AG04450 (cell line): ENCODE measurements at regions of chr19 and their contacts with region 1.

Region 1: DNA sequence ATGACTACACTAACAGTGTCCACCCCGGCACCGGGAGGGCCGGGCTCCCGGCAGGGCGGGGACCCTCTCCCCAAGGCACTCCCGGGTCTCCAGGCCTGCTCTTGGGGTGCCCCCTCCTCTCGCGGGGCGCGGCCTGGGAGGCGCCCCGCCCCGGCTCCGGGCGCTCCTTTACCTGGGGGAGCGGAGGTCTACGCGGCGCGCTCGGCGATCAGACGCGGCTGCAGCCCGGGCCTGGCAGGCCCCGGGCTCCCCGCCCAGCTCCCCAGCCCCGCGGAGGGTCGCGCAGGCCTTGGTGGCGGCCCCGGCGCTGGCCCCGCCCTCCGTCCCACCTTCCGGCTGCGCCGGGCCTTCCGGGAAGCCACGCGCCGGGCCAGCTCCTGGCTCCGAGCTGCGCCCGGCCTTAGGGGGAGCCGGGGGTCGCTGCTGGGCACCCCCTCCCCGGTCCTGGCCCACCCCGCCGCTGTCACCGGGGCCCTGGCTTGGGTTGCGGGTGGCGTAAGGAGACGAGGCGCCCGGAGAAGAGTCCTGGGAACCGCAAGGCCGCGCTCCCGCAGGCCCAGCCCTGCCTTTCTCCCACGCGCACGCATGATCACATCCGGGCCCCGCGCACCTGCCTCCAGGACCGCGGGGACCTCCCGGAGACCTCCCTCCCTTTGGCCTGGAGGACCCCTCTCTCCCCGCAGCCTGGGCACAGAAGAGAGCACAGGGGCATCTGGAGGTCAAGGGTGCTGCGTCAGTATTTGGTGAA is at the start of gene C19orf12:
- DNase-seq: no peak
- H3K4me3 ChIP-seq: peak within 1 kb of the TSS; percentile 79
- H3K27ac ChIP-seq: peak within 1 kb of the TSS; percentile 52
- H3K27me3 ChIP-seq: no peaks in the 10 kb centered on the region
- CTCF ChIP-seq: no peak
- polyA plus RNA-seq, gene C19orf12: 27.1 and 27.9 TPM in 2 replicates

Region 2: DNA sequence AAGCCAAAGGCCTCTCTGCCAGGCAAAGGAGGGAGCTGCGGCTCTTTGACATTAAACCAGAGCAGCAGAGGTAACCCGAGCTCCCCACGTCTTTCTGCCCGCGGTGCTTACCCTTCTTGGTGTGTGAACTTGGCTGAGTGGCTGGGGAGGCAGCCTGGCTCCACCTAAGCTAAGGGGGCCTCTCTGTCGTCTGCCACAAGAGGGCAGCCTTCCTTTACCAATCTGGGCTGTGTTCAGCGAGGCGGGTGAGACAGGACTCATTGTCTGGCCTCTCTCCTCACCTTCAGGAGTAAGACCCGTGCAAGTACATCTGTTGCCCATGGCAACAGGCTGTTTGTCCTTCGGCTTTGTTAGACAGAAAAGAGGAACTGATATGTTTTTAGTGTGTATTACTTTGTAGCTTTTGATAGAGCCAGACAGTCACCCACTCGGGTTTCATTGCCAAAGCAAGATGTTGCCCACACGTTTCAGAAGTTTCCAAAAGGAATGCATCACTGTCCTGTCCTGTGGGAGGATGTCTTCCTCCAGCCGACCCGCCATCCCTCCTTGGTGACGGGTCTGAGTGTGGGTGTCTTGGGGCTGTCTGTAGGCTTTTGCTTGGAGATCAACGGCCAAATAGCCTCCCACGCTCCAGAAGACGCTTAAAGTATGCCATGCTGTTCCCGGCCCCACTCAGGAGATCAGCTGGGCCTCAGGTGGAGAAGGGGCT is 104.4 kb before region 1 on chr19:
- CTCF ChIA-PET with region 1: interaction called, 550 read pairs
- POLR2A ChIA-PET with region 1: interaction called, 17 read pairs
- DNase-seq: peak; percentile 63
- H3K4me3 ChIP-seq: no peak overlapping the region
- H3K27ac ChIP-seq: no peak overlapping the region
- H3K27me3 ChIP-seq: no peaks in the 10 kb centered on the region
- CTCF ChIP-seq: peak; percentile 91

Region 3: DNA sequence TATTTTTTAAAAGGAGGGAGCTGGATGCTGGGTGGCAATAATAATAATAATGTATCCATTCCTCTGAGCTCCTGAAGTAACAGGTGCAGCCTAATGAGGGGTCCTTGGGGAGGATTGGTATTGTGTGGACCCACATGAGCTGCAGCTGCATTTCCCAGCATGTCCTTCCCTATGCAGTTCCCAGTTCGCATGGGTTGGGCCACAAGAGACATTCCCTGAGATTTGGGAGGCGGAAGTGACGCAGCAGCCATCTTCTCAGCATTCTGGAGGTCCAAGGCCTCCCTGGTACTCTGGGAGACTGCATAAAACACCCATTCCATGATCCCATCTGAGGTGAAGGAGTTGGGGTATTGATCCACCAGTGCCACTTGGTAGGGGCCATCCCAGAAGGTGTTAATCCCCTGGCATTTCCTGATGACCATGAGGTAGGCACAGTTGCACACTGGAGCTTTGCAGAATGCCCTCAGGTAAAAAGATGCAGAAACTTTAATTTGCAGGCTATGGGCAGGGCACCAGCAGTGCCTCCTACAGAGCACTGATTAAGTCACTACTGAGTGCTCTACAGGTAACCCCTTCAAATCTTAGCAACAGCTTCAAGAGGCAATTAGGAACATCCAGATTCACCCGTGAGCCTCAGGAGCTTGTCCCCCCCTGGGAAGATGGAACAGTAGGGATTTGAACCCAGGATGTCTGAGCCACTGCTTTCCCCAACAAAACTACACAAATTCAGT is 83.6 kb before region 1 on chr19:
- CTCF ChIA-PET with region 1: interaction called, 15 read pairs
- POLR2A ChIA-PET with region 1: no interaction called
- DNase-seq: no peak
- H3K4me3 ChIP-seq: no peak overlapping the region
- H3K27ac ChIP-seq: no peak overlapping the region
- H3K27me3 ChIP-seq: peaks cover 4% of the 10 kb centered on the region
- CTCF ChIP-seq: no peak

Region 4: DNA sequence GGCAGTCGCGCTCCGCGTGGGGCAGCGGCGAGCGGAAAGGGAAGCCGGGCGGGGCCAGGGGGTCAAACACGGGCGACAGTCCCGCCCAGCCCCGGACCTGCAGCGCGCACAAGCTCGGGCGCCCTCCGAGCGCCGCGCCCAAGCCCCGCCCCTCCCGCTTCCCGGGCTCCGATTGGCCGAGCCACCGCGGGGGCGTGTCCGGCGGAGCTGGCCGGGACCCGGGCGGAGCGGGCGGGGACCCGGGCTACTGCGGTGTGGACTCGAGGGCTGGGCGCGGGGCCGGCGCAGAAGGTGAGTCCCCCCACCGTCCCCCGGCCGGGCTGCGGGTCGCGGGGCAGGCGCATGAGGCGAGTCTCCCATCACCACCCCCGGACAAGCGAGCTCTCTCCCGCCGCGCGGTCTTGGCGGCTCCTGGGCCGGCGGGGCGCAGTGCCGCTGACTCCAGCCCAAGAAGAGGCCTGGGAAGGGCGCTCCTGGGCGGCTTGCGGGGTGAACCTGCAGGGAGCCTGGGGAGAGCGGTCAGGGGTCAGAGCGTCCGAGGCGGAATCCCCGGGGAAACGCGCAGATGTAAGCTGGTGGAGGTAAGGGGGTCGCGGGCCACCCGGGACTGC is 49.8 kb before region 1 on chr19 and contains the start of gene PLEKHF1:
- CTCF ChIA-PET with region 1: interaction called, 33 read pairs
- POLR2A ChIA-PET with region 1: interaction called, 4 read pairs
- DNase-seq: no peak
- H3K4me3 ChIP-seq: peak within 1 kb of the TSS; percentile 81
- H3K27ac ChIP-seq: peak within 1 kb of the TSS; percentile 81
- H3K27me3 ChIP-seq: no peaks in the 10 kb centered on the region
- CTCF ChIP-seq: no peak
- polyA plus RNA-seq, gene PLEKHF1: 5.4 and 6.4 TPM in 2 replicates

Region 5: DNA sequence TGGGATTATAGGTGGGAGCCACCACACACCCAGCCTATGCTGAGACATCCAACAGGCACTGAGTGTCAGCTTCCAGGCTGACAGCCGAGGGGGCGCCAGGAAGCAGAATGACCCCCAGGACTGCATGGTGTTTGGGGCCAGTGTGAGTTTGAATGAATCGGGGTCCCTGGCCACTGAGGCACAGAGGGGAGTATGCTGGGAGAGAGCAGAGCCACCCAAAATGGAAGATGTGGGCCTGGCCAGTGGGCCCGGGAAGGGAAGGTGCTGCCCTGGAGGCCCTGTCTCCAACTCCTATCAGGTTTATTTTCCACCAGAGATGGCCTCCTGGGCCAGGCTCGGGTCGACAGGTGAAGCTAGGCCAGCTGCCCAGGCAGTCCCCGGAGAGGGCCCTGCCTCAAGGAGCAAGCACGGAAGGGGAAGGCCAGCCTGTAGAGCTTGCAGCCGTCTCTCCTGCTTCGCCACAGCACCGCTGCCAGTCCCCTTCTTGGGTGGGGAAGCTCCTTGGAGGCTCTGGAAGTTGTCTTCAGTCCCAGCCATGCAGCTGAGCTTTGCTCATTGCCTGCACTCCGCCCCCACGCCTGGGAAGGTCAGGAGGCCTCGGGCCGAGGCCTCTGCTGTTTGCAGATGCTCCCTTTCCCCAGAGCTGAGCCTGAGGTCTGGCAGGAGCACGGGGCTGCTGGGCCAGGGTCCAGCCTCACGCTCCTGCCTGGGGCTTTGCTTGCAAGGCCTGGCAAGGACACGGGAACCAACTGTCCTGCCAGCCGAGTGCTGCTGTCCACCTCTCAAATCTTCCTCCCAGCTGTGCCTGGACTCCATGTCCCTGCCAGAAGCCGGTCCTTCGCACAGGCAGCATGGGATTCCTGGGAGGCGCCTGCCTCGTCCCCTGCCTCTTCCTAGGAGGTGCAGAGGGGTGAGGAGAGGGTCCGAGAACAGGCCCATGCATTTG is 36.7 kb before region 1 on chr19:
- CTCF ChIA-PET with region 1: interaction called, 14 read pairs
- POLR2A ChIA-PET with region 1: no interaction called
- DNase-seq: no peak
- H3K4me3 ChIP-seq: no peak overlapping the region
- H3K27ac ChIP-seq: no peak overlapping the region
- H3K27me3 ChIP-seq: no peaks in the 10 kb centered on the region
- CTCF ChIP-seq: no peak

Region 6: DNA sequence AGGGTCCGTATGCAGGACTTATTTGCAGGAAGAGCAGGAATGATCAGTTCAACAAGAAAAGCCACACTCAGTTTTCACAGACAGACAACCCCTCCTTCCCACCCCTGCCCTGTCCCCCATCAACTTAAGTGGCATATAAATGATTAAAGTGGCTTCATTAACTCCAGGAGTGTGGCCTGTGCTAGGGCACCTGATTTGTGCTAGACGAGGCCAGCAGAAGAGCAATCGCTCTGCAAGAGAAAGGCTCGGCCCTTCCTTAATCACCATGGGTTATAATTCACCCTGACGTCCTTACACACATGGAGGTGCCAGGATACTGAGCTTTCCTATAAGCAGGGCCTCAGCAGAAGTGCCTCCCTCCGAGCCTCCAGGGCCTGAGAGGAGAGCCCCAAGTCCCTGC is 14.6 kb before region 1 on chr19:
- CTCF ChIA-PET with region 1: interaction called, 87 read pairs
- POLR2A ChIA-PET with region 1: no interaction called
- DNase-seq: no peak
- H3K4me3 ChIP-seq: no peak overlapping the region
- H3K27ac ChIP-seq: no peak overlapping the region
- H3K27me3 ChIP-seq: no peaks in the 10 kb centered on the region
- CTCF ChIP-seq: no peak

Region 7: DNA sequence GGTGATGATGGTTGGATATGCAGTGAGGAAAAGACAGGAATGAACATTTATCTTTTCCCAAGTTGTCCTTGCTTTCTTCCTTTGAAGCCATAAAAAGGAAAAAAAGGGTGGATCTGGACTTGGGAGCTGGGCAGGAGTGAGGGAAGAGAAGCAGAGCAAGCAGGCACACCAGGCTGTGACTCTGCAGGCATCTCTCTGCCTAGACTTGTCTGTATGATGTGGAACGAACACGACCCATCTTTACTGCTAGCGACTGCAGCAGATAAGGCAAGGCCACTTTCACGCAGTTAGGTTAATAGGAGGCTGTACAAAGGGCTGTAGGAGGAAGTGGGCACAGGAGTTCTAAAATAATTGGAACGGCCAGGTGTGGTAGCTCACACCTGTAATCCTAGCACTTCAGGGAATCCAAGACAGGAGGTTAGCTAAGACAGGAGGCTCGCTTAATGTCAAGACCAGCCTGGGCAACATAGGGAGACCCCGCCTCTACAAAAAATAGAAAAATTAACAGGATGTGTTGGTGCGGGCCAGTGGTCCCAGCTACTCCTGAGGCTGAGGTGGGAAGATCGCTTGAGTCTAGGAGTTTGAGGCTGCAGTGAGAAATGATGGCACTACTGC is 226.0 kb after region 1 on chr19:
- CTCF ChIA-PET with region 1: interaction called, 18 read pairs
- POLR2A ChIA-PET with region 1: no interaction called
- DNase-seq: no peak
- H3K4me3 ChIP-seq: no peak overlapping the region
- H3K27ac ChIP-seq: no peak overlapping the region
- H3K27me3 ChIP-seq: no peaks in the 10 kb centered on the region
- CTCF ChIP-seq: no peak